ENCODE measurements at regions of chr1 and their contacts with region 1.

Region 1: DNA sequence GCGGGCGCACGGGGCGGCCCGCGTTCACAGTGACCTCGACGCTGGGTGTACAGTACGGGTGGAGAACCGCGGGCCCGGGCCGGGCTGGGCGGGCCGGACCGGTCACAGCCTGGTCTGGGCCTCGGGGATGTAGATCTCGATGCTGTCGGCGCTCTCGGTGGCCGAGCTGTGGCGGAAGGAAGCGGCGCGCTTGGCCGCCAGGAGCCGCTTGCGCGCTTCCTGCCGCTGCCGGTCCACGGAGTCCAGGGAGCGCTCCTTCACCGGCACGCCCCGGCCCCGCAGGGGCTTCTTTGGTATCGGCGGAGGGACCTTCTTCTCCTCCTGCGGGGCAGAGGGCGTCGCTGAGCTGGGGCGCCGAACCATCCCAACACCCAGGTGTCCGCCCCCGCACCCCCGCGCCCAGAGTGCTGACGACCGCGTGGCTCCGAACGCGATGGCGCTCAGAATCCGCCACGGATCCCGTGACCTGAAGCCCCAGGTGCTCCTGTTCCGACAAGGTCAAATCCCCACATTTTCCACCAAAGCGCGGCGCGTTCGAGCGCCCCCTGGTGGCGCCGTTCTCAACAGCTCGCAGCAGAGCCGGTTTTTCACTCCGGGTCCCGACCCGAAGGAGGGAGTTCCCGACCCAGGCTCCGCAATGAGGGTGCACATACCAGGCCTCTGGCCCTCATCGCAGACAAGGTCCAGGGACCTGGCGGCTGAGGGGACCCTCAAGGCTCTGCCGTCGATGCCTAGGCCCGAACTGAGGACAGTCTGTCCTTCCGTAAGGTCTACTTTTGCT is 6.6 kb upstream of the SMIM12 start:
- DNase-seq: peak; percentile 48
- H3K4me3 ChIP-seq: peak overlapping the region; percentile 54 to 77 (median 70)
- H3K27ac ChIP-seq: no peak overlapping the region
- H3K4me1 ChIP-seq: peaks cover 8% of the 10 kb centered on the region
- H3K27me3 ChIP-seq: no peaks in the 10 kb centered on the region
- CTCF ChIP-seq: peak; percentile 78 to 96

Region 2: DNA sequence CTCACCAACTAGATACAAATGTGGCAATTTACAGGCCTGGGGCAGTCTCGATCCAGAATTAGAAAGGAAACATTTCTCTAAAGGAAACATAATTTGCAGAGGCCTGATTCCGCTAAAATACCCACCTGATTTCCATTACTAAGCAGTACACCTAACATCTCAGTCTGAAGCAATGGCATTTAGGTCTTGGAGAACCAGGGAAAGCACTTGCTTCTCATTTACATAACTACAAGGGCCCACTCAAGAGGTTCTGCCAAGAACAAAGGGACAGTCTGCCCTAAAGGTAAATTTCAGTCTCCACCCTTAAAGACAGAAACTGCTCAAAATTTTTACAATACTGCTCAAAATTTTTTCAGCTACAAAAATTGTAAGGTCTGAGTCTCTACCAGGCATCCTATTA is 235.0 kb before region 1 on chr1:
- CTCF ChIA-PET with region 1: no interaction called
- dilution Hi-C with region 1: no loop called
- in situ Hi-C with region 1: no loop called
- intact Hi-C with region 1: no loop called
- DNase-seq: no peak
- H3K4me3 ChIP-seq: no peak overlapping the region
- H3K27ac ChIP-seq: no peak overlapping the region
- H3K4me1 ChIP-seq: no peaks in the 10 kb centered on the region
- H3K27me3 ChIP-seq: no peaks in the 10 kb centered on the region
- CTCF ChIP-seq: no peak

Region 3: DNA sequence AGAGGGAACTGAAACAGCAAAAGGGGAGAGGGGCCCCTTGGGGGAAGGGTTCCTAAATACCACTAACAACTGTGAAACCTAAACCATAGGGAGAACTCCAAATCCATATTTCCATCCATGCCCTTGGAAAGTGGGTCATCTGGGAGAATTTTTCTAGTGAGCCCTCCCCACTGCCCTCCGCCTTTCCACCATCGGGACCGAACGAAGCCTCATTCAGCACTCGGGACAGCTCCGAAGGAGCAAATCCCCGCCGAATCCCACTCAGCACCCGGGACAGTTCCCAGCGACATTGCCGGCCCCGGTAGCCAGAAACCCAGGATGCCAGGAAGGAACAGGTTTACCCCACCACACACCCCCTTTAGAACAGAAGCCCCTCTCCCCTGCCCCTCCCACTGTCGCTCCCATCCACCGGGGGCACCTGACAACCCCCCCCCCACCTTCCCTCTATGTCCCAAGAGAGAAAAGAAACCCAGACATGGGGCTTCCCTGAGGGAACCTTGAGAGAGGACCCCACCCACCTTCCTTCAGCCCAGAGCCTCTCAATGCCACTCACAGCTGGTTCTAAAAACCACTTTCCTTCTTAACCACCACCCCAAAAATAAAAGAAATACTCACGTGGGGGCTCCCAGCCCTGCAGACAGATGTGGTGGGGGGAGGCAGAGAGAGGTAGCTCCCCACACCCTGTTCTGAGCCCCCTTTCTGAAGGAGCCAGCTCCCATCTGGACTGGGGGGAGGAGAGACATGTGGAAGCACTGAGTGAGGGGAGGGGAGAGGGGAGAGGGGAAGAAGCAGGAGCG is 58.8 kb after region 1 on chr1:
- CTCF ChIA-PET with region 1: no interaction called
- dilution Hi-C with region 1: loop called (anchors 5 kb)
- in situ Hi-C with region 1: no loop called
- intact Hi-C with region 1: no loop called
- DNase-seq: peak; percentile 45
- H3K4me3 ChIP-seq: no peak overlapping the region
- H3K27ac ChIP-seq: no peak overlapping the region
- H3K4me1 ChIP-seq: peaks cover 11% of the 10 kb centered on the region
- H3K27me3 ChIP-seq: peaks cover 18% of the 10 kb centered on the region
- CTCF ChIP-seq: no peak

Region 4: DNA sequence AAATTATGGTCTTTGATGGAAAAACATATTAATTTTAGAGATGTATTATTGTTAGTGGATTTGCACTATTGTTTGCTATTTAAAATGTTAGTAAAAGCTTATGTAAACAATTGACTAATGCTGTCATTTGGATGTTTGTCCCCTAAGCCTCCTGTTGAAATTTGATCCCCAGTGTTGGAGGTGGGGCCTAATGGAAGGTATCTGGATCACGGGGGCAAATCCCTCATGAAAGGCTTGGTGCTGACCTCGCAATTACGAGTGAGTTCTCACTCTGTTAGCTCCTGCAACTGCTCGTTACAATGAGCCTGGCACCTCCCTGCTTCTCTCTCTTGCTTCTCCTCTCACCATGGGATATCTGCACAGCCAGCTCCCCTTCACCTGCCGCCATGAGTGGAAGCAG is 104.7 kb after region 1 on chr1:
- CTCF ChIA-PET with region 1: no interaction called
- dilution Hi-C with region 1: loop called (anchors 5 kb)
- in situ Hi-C with region 1: no loop called
- intact Hi-C with region 1: no loop called
- DNase-seq: no peak
- H3K4me3 ChIP-seq: no peak overlapping the region
- H3K27ac ChIP-seq: no peak overlapping the region
- H3K4me1 ChIP-seq: no peaks in the 10 kb centered on the region
- H3K27me3 ChIP-seq: no peaks in the 10 kb centered on the region
- CTCF ChIP-seq: no peak